AG04450 (cell line): ENCODE measurements at regions of chr11 and their contacts with region 1.

Region 1: DNA sequence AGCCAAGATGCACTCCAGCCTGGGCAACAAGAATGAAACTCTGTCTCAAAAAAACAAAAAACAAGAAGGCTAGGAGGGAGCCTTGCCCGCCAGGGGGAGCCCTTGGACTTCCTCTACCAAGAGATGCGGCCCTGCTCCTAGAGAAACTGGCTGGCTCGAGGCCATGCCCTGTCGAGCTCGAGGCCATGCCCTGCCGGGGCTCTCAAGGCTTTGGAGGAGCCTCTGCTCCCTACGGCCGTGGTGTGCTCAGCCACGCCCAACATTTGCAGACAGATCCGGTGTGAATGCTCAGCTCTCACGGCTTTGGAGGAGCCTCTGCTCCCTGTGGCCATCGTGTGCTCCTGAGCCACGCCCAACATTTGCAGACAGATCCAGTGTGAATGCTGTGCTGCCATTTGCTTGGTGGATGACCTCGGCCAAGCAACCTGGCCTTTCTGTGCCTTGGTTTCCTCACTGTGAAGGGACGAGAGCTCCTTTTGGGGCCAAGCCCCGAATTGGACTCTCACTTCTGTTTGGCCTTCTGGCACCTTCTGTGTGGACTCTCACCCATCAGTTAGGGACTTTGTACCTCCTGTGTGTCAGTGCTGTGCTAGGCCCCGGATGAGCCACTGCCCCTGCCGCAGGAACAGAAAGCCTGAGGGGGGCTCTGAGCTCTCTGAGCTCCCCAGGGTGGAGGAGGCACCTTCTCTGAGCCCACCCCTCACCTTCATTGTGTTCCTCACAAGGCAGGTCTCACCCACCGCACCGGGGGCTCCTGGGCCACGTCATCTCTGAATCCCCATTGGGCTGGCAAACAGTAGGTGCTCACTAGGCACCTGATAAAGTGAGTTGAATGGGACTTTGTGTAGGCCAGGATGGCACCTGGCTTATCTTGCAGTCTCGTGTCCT is 14.1 kb downstream of the C11orf24 start:
- DNase-seq: peak; percentile 66
- H3K4me3 ChIP-seq: peak overlapping the region; percentile 10; the same call in 1 of the 2 replicates
- H3K27ac ChIP-seq: no peak overlapping the region
- H3K27me3 ChIP-seq: no peaks in the 10 kb centered on the region
- CTCF ChIP-seq: peak; percentile 87

Region 2: GRCh38 chr11:67045341-67045764 is 1212.4 kb before region 1 on chr11:
- CTCF ChIA-PET with region 1: no interaction called
- POLR2A ChIA-PET with region 1: no interaction called
- DNase-seq: peak; percentile 69
- H3K4me3 ChIP-seq: no peak overlapping the region
- H3K27ac ChIP-seq: no peak overlapping the region
- H3K27me3 ChIP-seq: peaks cover 12% of the 10 kb centered on the region
- CTCF ChIP-seq: no peak

Region 3: GRCh38 chr11:68242616-68243015 is 15.1 kb before region 1 on chr11:
- CTCF ChIA-PET with region 1: interaction called, 12 read pairs
- POLR2A ChIA-PET with region 1: no interaction called
- DNase-seq: no peak
- H3K4me3 ChIP-seq: no peak overlapping the region
- H3K27ac ChIP-seq: no peak overlapping the region
- H3K27me3 ChIP-seq: peaks cover 2% of the 10 kb centered on the region
- CTCF ChIP-seq: no peak

Region 4: DNA sequence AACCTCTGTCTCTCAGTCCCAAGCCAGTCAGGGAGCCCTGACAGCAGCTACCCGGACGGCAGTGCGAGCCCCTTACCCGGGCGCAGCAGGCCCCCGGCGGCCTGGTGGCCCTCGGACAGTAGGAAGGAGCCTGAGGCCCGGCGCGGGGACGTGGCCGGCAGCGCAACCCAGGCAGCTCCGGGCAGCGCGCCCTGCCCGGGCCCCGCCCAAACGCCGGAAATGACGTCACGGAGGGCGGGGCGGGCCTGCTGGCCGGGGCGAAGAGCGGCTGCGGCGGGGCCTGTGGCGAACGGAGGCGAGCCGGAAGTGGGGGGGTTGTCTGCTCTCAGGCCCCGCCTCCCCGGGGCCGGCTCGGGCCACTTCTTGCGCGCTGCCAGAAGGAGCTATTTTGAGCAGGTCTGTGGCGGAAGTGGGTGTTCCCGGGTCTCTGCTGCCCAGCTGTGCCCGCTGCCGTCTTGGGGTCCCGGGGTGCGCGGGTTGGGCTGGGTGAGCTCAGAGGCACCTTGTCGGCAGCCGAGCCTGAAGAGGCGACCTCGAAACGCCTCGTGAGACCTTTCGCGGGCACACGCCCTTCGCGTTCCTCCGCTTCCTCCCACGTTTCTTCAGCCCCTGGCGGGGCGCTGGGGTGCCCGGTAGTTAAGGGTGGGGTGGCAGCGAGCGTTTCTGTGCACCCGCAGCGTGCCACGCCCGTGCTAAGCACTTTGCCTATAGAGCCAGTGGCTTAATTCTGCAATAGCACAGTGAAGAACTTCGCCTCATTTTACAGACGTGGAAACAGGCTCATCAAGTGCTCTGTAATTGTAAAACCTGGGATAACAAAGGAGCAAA is 14.3 kb after region 1 on chr11 and contains the start of gene C11orf24:
- CTCF ChIA-PET with region 1: interaction called, 10 read pairs
- POLR2A ChIA-PET with region 1: interaction called, 4 read pairs
- DNase-seq: peak; percentile 82
- H3K4me3 ChIP-seq: peak within 1 kb of the TSS; percentile 95
- H3K27ac ChIP-seq: peak within 1 kb of the TSS; percentile 98
- H3K27me3 ChIP-seq: no peaks in the 10 kb centered on the region
- CTCF ChIP-seq: no peak
- polyA plus RNA-seq, gene C11orf24: 39.1 and 58.9 TPM in 2 replicates

Region 5: GRCh38 chr11:68354148-68354872 is 96.6 kb after region 1 on chr11:
- CTCF ChIA-PET with region 1: no interaction called
- POLR2A ChIA-PET with region 1: no interaction called
- DNase-seq: peak; percentile 85
- H3K4me3 ChIP-seq: no peak overlapping the region; the same call in 1 of the 2 replicates
- H3K27ac ChIP-seq: peak overlapping the region; percentile 93
- H3K27me3 ChIP-seq: no peaks in the 10 kb centered on the region
- CTCF ChIP-seq: no peak

Region 6: GRCh38 chr11:68447015-68447801 is 189.5 kb after region 1 on chr11:
- CTCF ChIA-PET with region 1: interaction called, 14 read pairs
- POLR2A ChIA-PET with region 1: no interaction called
- DNase-seq: no peak
- H3K4me3 ChIP-seq: no peak overlapping the region
- H3K27ac ChIP-seq: no peak overlapping the region
- H3K27me3 ChIP-seq: no peaks in the 10 kb centered on the region
- CTCF ChIP-seq: peak; percentile 86

Region 7: GRCh38 chr11:68498321-68498720 is 240.6 kb after region 1 on chr11:
- CTCF ChIA-PET with region 1: no interaction called
- POLR2A ChIA-PET with region 1: no interaction called
- DNase-seq: no peak
- H3K4me3 ChIP-seq: no peak overlapping the region
- H3K27ac ChIP-seq: no peak overlapping the region
- H3K27me3 ChIP-seq: no peaks in the 10 kb centered on the region
- CTCF ChIP-seq: no peak